ENCODE measurements at regions of chr16 and their contacts with region 1.

Region 1: GRCh38 chr16:67719048-67719777 is at the start of gene GFOD2:
- DNase-seq: peak; percentile 94 to 95
- ATAC-seq: peak; percentile 94 to 96
- H3K4me3 ChIP-seq: peak within 1 kb of the TSS; percentile 77 to 96 (median 88)
- H3K27ac ChIP-seq: peak within 1 kb of the TSS; percentile 90 to 97 (median 93)
- H3K4me1 ChIP-seq: peaks cover 16 to 28% of the 10 kb centered on the region in 2 donors
- H3K27me3 ChIP-seq: no peaks in the 10 kb centered on the region
- CTCF ChIP-seq: peak in 1 of 5 experiments; percentile 26
- POLR2A ChIP-seq: peak; percentile 92 to 95
- total RNA-seq, gene GFOD2: 8.9 to 15.4 (median 11.6) TPM

Region 2: GRCh38 chr16:67672739-67673662 is 46.2 kb before region 1 on chr16:
- in situ Hi-C with region 1: no loop called
- intact Hi-C with region 1: loop called (anchors 2 kb)
- DNase-seq: peak; percentile 40 to 57
- ATAC-seq: peak; percentile 38 to 51
- H3K4me3 ChIP-seq: no peak overlapping the region
- H3K27ac ChIP-seq: peak overlapping the region; percentile 50 to 80 (median 73)
- H3K4me1 ChIP-seq: peaks cover 13 to 21% of the 10 kb centered on the region in 2 donors
- H3K27me3 ChIP-seq: no peaks in the 10 kb centered on the region
- CTCF ChIP-seq: peak; percentile 63 to 82 (median 74)
- POLR2A ChIP-seq: no peak

Region 3: DNA sequence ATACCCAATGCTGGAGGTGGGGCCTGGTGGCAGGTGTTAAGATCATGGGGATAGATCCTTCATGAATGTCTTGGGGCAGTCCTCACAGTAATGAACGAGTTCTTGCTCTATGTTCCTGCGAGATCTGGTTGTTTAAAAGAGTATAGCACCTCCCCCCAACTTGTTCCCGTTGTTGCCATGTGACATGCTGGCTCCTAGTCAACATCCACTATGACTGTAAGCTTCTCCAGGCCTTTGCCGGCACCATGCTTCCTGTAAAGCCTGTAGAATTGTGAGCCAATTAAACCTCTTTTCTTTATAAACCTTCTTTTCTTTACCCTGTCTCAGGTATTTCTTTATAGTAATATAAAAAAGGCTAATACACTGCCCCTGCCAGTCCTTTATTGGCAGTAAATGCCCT is 53.9 kb after region 1 on chr16:
- in situ Hi-C with region 1: no loop called
- intact Hi-C with region 1: loop called (anchors 5 kb)
- DNase-seq: peak; percentile 33 to 65
- ATAC-seq: peak; percentile 79 to 83
- H3K4me3 ChIP-seq: no peak overlapping the region
- H3K27ac ChIP-seq: peak overlapping the region; percentile 64 to 82 (median 74)
- H3K4me1 ChIP-seq: peaks cover 24 to 31% of the 10 kb centered on the region in 2 donors
- H3K27me3 ChIP-seq: no peaks in the 10 kb centered on the region
- CTCF ChIP-seq: no peak
- POLR2A ChIP-seq: no peak

Measured in gastrocnemius medialis (tissue), 4 donors.